Motor neuron (in vitro differentiated cells): ENCODE measurements at regions of chr2 and their contacts with region 1.

Region 1: DNA sequence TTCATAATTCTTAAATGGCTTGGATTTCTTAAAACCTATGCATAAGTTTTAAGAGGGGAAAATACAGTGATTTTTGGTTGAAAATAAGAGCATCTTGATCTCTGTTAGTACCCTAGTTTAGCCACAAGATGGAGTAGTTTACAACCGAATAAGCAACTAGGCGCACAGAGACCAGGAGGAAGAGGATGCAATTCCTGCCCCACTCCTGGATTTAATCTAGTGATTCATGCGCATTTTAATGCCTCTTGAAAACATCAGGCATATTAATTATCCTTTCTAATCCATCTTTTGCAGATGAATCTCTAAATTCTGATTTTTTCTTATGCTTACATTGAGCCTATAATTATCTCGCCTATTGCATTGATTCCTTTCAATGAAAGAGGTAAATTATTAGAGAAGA is 76.7 kb downstream of the MRPS9 start:
- ATAC-seq: peak in 6 of 8 experiments; percentile 23 to 67 (median 46)
- H3K4me3 ChIP-seq: no peak overlapping the region
- H3K27ac ChIP-seq: no peak overlapping the region
- H3K4me1 ChIP-seq: peaks cover 0 to 11% of the 10 kb centered on the region in 2 donors

Region 2: GRCh38 chr2:105005181-105005951 is 109.2 kb before region 1 on chr2:
- in situ Hi-C with region 1: no loop called
- ATAC-seq: peak in 1 of 8 experiments; percentile 72
- H3K4me3 ChIP-seq: no peak overlapping the region
- H3K27ac ChIP-seq: no peak overlapping the region
- H3K4me1 ChIP-seq: peaks cover 0 to 12% of the 10 kb centered on the region in 2 donors

Region 3: DNA sequence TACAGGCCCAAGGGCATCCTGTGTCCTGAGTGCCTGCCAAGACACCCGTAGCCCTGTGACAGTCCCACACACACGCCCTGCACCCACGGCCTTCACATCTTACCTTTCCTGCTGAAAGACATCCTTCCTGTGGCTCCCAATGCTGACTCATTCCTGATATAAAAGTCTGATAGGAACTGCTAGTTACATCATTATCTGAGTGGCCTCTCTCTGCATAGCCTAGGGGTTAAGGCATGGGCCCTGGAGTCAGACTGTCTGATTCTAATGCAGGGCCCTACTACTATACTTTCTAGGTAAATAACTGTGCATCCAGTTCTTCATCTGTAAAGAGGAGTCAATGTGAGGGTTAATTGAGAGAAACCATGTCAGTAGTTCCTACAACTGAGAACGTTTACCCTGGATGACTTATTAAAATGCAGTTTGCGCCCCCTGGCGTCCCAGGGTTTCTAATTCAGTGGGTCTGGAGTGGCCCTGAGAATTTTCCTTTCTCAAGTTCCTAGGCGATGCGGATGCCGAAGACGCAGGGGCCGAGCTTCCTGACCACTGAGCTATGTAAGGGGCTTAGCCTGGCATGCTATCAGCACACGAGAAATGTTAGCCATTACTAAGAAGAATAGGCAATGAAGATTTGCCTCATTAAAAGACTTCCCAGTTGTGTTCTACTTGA is 121.0 kb after region 1 on chr2:
- in situ Hi-C with region 1: loop called (anchors 5 to 25 kb)
- ATAC-seq: peak; percentile 81 to 92 (median 87)
- H3K4me3 ChIP-seq: no peak overlapping the region
- H3K27ac ChIP-seq: no peak overlapping the region
- H3K4me1 ChIP-seq: peaks cover 7 to 8% of the 10 kb centered on the region in 2 donors

Region 4: GRCh38 chr2:105243961-105244360 is 129.4 kb after region 1 on chr2:
- in situ Hi-C with region 1: loop called (anchors 5 to 25 kb)
- ATAC-seq: peak in 1 of 8 experiments; percentile 68
- H3K4me3 ChIP-seq: no peak overlapping the region
- H3K27ac ChIP-seq: no peak overlapping the region
- H3K4me1 ChIP-seq: no peaks in the 10 kb centered on the region

Region 5: GRCh38 chr2:105294844-105295481 is 180.4 kb after region 1 on chr2:
- in situ Hi-C with region 1: loop called in 1 of 9 experiments (anchors 10 kb)
- ATAC-seq: peak; percentile 63 to 97 (median 79)
- H3K4me3 ChIP-seq: no peak overlapping the region
- H3K27ac ChIP-seq: no peak overlapping the region
- H3K4me1 ChIP-seq: peaks cover 0 to 2% of the 10 kb centered on the region in 2 donors

Region 6: DNA sequence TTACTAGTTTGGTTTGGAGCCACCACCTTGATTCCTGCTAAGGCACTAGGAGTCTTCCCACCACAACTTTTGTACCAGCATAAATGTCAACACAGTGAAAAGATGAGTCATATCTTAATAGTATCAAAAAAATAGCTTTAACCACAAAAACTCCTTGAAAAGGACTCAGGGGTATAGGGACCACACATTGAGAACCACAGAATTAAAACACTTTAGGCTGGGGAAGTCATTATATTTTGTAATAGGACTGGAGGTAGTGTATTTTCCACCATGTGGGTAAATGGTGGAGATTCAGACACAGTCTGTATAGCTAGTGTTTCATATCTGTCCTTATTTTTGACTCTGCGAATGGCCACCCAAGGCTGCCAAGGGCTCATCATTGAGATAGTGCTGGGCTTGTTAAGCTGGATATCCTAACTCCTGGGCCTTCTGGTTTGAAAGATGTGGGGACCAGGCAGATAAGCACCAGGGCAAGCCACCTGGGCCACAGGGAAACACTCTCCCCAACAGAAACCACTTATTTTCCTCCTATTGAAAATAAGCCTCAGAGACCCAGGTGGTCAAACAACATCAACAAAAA is 303.4 kb after region 1 on chr2:
- in situ Hi-C with region 1: no loop called
- ATAC-seq: no peak
- H3K4me3 ChIP-seq: no peak overlapping the region
- H3K27ac ChIP-seq: no peak overlapping the region
- H3K4me1 ChIP-seq: no peaks in the 10 kb centered on the region